Caco-2 (cell line): ENCODE measurements at regions of chr3 and their contacts with region 1.

Region 1: GRCh38 chr3:155411500-155412223 is 118.2 kb upstream of the STRIT1 start:
- DNase-seq: no peak
- H3K4me3 ChIP-seq: no peak overlapping the region
- H3K4me3 Mint-ChIP-seq: no peak overlapping the region
- H3K27ac Mint-ChIP-seq: no peak overlapping the region
- H3K4me1 ChIP-seq: peaks cover 40% of the 10 kb centered on the region
- H3K4me1 Mint-ChIP-seq: peaks cover 37% of the 10 kb centered on the region
- H3K27me3 ChIP-seq: no peaks in the 10 kb centered on the region
- H3K27me3 Mint-ChIP-seq: no peaks in the 10 kb centered on the region
- CTCF ChIP-seq: no peak

Region 2: DNA sequence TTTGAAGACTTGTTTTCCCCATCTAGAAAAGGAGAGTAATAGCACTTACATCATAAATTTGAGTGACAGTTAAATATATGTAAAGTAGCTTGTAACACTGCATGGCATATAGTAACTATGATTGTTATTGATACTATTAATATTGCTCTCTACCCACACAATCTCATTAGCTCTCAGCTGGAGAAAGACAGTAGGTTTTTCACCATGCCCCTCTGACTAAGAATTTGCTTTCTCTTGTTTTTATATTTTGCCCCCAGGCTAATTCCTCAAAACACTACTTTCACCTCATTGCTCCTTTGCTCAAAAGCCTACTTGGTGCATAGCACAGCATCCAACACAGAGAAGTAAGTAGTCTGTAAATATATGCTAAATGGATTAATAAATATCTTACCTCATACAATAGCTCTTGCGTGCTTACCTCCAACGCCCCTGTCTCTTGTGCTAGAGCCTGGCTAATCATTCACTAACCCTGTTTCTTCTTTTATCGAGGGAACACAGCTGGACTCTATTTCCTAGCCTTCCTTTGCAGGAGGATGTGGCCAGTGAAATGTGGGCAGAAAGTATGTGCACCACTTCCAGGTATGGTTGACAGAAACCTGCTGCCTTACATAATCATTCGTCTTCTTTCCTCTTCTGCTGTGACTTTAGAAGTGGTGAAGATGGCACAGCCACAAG is 143.3 kb after region 1 on chr3:
- CTCF ChIA-PET with region 1: no interaction called
- POLR2A ChIA-PET with region 1: no interaction called
- intact Hi-C with region 1: loop called (anchors 2 kb)
- DNase-seq: peak; percentile 57 to 60
- H3K4me3 ChIP-seq: no peak overlapping the region
- H3K4me3 Mint-ChIP-seq: peak overlapping the region; percentile 61
- H3K27ac Mint-ChIP-seq: peak overlapping the region; percentile 71
- H3K4me1 ChIP-seq: peaks cover 21% of the 10 kb centered on the region
- H3K4me1 Mint-ChIP-seq: peaks cover 21% of the 10 kb centered on the region
- H3K27me3 ChIP-seq: no peaks in the 10 kb centered on the region
- H3K27me3 Mint-ChIP-seq: no peaks in the 10 kb centered on the region
- CTCF ChIP-seq: no peak